ENCODE measurements at regions of chr5 and their contacts with region 1.

Region 1: DNA sequence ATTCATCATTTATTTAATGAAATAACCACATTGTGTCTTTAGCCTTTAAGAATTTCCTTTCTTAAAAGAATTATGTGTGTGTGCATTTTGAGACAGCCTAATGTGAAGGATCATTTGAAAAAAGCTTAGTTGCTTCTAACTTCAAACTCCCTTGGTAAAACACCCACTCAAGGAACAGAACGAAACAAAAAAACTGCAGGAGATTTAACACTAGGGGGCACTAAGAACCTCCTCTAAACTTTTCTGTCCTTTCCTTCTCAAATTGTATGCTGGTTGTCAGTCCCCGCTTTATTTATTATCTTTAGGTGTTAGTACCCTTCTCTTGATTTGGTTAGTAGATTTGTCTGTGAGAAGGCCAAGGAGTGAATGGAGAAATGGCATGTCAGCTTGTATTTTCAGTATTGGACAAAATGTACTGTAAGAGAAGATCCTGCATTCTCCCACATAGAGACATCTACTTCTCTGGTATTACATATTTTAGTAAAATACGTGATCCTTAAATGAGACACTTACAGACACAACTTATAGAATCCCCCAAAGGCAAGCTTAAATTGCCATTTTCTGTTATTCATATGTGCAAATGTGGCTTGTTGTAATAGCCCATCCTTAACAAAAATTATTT is 229.7 kb downstream of the MRPS30 start:
- DNase-seq: no peak
- ATAC-seq: peak; percentile 48

Region 2: DNA sequence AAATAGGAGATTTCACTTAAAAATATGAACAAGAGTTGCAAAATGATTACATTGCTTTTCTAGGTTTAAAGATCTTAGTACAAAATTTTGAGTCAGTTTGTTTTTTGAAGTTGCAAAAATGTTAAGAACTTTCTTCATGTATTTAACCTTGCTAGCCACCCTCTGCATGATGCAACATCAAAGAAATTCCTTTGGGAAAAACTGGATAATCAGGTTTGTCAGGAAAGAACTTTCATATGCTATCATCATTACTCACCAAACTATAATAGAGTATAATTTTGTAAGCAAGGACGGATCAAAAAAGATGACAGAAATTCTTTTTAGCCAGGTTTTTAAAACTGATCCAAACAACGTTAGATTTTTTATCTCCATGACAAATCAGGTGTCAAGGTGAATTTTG is 346.7 kb before region 1 on chr5:
- intact Hi-C with region 1: no loop called
- DNase-seq: no peak
- ATAC-seq: no peak

Region 3: DNA sequence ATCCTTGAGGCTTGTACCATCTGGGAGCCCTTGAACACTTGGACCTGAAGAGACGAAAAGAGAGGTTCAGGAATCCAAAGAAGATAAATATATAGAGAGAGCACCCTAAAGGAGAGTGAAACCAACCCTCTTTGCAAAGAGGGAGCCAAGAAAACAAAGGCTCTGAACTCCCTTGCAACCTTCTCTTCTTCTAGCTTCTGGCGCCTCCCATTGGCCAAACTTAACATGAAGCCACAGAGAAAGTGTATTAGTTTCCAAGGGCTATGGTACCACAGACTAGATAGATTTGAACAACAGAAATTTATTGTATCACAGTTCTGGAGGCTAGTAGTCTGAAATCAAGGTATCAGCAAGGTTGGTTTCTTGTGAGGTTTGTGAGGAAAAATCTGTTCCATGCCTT is 482.6 kb after region 1 on chr5:
- intact Hi-C with region 1: loop called (anchors 5 kb)
- DNase-seq: no peak
- ATAC-seq: peak; percentile 64

Region 4: GRCh38 chr5:45696206-45696836 is 657.8 kb after region 1 on chr5 and contains the start of gene HCN1:
- intact Hi-C with region 1: loop called (anchors 10 kb)
- DNase-seq: peak; percentile 86
- ATAC-seq: peak; percentile 100
- total RNA-seq, gene HCN1: 0.05 TPM

Measured in Right ventricle myocardium superior (tissue), 1 donor.